Activated CD4-positive, alpha-beta T cell treated with anti-CD3 and anti-CD28 coated beads, Interleukin-2, amount 10 ng/mL, durations not matched to agents 24 days and 14 days (primary cell): ENCODE measurements at regions of chr11 and their contacts with region 1.

Region 1: DNA sequence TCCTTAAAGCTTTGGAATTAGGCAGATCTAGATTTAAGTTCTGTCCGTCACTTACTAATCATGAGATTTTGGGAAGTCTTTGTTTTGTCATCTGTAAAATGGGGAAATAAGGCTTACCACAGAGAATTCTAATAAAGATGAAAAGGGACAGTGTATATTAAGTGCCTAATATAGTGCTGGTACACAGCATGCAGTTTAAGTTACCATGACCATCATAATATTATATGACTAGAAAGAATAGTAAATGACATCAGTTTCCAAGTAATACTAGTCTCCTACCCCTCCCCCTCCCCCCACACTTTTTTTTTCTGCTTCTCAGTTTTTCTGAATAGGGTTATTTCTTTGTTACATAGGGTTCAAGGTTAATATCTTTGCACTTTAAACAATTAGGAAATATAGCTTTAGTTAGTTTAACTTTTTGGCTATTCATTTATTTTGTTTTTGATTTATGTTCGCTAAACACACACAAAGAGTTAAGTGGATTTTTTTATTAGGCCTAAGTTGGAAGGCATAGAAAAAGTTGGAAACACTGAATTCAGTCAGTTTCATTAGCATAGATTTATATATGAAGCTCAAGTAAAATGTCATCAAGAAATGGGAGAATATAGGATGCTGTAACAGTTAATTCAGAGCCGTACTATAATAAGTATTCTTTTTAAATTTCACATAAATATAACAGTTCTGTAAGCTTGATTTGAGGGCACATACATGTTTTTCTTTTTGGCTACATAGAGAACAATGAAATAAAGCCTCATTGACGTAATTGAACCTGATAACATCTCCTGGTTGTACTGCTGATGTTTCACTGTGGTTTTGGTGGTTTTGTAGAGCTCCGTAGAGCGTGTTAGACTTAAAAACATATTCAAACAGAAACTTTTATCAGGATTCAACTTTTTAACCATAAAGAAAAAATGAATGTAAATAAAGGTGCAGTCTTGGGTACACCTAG is 121.2 kb downstream of the PDE3B start:
- DNase-seq: peak; percentile 90
- H3K4me3 Mint-ChIP-seq: no peak overlapping the region
- H3K27ac Mint-ChIP-seq: no peak overlapping the region
- H3K4me1 Mint-ChIP-seq: peaks cover 32% of the 10 kb centered on the region
- H3K27me3 Mint-ChIP-seq: no peaks in the 10 kb centered on the region

Region 2: GRCh38 chr11:13868710-13869397 is 896.0 kb before region 1 on chr11:
- intact Hi-C with region 1: loop called (anchors 5 kb)
- DNase-seq: peak; percentile 81
- H3K4me3 Mint-ChIP-seq: peak overlapping the region; percentile 47
- H3K27ac Mint-ChIP-seq: peak overlapping the region; percentile 86
- H3K4me1 Mint-ChIP-seq: peaks cover 40% of the 10 kb centered on the region
- H3K27me3 Mint-ChIP-seq: no peaks in the 10 kb centered on the region

Region 3: GRCh38 chr11:14249121-14249963 is 515.5 kb before region 1 on chr11:
- intact Hi-C with region 1: no loop called
- DNase-seq: peak; percentile 90
- H3K4me3 Mint-ChIP-seq: peak overlapping the region; percentile 32
- H3K27ac Mint-ChIP-seq: no peak overlapping the region
- H3K4me1 Mint-ChIP-seq: peaks cover 8% of the 10 kb centered on the region
- H3K27me3 Mint-ChIP-seq: peaks cover 17% of the 10 kb centered on the region

Region 4: DNA sequence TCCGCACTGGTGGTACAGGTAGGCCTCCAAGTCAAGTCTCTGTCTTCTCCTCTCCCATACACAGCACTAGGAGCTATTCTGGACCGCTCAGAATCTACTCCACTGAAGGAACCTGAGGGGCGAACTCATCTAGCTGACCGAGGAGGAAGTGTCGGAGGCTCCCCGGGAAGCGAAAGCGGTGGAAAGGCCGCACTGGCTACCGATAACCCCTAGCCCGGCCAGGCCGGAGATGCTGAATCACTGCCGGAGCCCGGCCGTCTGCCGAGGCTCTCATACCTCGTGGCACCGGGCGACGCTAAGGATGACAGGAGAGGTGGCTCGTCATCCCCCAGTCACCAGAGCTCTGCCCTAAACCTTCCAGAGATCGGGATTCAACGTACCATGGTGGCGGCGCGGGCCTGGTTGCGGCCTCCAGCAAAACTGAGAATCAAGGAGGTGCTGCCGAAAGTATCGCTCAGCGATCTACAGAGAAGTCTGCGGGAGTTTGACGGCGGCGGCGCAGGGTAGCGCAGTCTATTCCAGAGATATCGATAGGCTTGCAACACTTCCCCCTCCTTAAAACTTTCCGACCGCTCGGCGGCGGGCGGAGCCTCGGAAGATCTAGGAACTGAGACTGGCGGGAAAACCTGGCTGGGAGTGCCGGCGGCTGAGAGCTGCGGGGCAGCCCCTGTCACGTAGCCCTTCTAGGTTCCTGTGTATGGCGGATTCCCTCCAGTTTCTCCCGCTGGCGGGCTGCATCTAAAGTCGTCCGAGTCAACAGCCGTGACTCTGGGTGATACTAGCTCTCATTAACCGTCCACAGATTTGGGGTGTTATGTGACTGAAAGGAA is 244.7 kb before region 1 on chr11 and contains the start of gene PSMA1:
- intact Hi-C with region 1: loop called (anchors 1 kb)
- DNase-seq: peak; percentile 98
- H3K4me3 Mint-ChIP-seq: peak within 1 kb of the TSS; percentile 96
- H3K27ac Mint-ChIP-seq: peak within 1 kb of the TSS; percentile 98
- H3K4me1 Mint-ChIP-seq: peaks cover 22% of the 10 kb centered on the region
- H3K27me3 Mint-ChIP-seq: no peaks in the 10 kb centered on the region
- total RNA-seq, gene PSMA1: 334 and 344 TPM in 2 replicates

Region 5: GRCh38 chr11:14578541-14578956 is 186.3 kb before region 1 on chr11:
- intact Hi-C with region 1: loop called (anchors 1 kb)
- DNase-seq: peak; percentile 92
- H3K4me3 Mint-ChIP-seq: peak overlapping the region; percentile 74
- H3K27ac Mint-ChIP-seq: peak overlapping the region; percentile 90
- H3K4me1 Mint-ChIP-seq: peaks cover 51% of the 10 kb centered on the region
- H3K27me3 Mint-ChIP-seq: no peaks in the 10 kb centered on the region

Region 6: DNA sequence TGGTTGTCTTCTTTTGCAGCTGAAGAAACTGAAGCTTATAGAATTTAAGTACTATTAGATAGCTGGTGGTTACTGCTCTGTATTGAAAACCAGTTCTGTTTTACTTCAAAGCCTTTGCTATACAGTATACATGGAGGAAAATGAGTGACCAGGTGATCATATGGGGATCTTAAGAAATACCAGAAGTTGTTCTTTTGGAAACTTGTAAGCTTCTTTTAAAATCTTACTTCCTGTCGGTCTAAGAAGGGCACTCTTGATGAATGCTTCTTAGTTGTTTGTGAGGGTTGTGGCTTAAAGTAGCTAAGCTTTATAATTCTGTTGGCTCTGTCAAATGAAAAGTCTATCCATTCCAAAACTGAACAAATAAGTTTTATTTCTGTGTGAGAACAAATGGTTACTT is 66.1 kb before region 1 on chr11:
- intact Hi-C with region 1: loop called (anchors 5 kb)
- DNase-seq: no peak
- H3K4me3 Mint-ChIP-seq: no peak overlapping the region
- H3K27ac Mint-ChIP-seq: no peak overlapping the region
- H3K4me1 Mint-ChIP-seq: peaks cover 29% of the 10 kb centered on the region
- H3K27me3 Mint-ChIP-seq: no peaks in the 10 kb centered on the region

Region 7: GRCh38 chr11:14784230-14784629 is 19.4 kb after region 1 on chr11:
- intact Hi-C with region 1: loop called (anchors 2 kb)
- DNase-seq: no peak
- H3K4me3 Mint-ChIP-seq: no peak overlapping the region
- H3K27ac Mint-ChIP-seq: peak overlapping the region; percentile 84
- H3K4me1 Mint-ChIP-seq: peaks cover 37% of the 10 kb centered on the region
- H3K27me3 Mint-ChIP-seq: no peaks in the 10 kb centered on the region

Region 8: GRCh38 chr11:14907411-14908213 is 142.8 kb after region 1 on chr11:
- intact Hi-C with region 1: loop called (anchors 1 kb)
- DNase-seq: peak; percentile 96
- H3K4me3 Mint-ChIP-seq: no peak overlapping the region
- H3K27ac Mint-ChIP-seq: peak overlapping the region; percentile 20
- H3K4me1 Mint-ChIP-seq: peaks cover 51% of the 10 kb centered on the region
- H3K27me3 Mint-ChIP-seq: no peaks in the 10 kb centered on the region